SK-N-SH (cell line): ENCODE measurements at regions of chr2 and their contacts with region 1.

Region 1: GRCh38 chr2:84925724-84926376 is 20.4 kb downstream of the TMSB10 start:
- DNase-seq: peak; percentile 87
- H3K4me3 ChIP-seq: peak overlapping the region; percentile 51 to 60
- H3K27ac ChIP-seq: peak overlapping the region in 1 of 2 experiments; percentile 36; a peak in 2 of 4 replicates
- H3K4me1 ChIP-seq: peaks cover 5 to 13% of the 10 kb centered on the region in 2 experiments; a peak in 2 of 4 replicates
- H3K27me3 ChIP-seq: no peaks in the 10 kb centered on the region
- CTCF ChIP-seq: peak; percentile 96
- EP300 ChIP-seq: no peak
- RAD21 ChIP-seq: peak; percentile 70

Region 2: DNA sequence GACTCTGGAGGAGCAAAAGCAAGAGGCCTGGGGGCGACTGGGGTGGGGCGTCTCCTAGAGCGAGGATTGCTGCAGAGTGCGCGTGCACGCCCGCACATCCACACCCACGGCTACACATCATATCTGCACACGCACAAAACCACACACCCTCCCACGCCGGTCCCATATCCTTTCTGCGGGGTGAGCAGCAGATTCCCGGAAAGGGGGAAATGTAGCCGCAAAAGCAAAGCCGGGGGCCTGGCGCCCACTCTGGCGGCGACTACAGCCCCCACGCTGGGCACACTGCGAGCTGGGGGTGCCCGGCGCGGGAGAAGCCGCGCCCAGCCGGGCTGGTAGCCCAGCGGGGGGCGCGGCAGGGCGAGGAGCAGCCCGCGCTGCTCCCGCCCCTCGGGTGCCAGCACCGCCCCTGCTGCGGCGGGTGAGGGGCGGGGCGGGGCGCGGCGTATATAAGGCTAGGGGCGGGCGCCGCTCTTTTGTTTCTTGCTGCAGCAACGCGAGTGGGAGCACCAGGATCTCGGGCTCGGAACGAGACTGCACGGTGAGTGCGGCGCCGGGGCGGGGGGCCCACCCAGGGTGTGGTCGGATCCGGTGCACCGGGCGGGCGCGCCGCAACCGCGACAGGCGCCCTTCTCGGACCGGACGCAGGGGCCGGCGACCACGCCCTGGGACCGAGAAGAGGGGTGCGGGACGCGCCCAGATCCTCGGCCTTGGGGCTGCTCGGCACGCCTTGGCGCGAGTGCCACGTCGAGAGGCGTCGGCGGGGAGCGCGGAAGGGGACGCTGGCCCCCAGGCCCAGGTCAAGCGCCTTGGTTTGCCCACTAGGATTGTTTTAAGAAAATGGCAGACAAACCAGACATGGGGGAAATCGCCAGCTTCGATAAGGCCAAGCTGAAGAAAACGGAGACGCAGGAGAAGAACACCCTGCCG is 20.4 kb before region 1 on chr2 and contains the start of gene TMSB10:
- CTCF ChIA-PET with region 1: interaction called, 36 read pairs
- POLR2A ChIA-PET with region 1: interaction called, 9 read pairs
- DNase-seq: peak; percentile 99
- H3K4me3 ChIP-seq: peak within 1 kb of the TSS; percentile 77 to 88
- H3K27ac ChIP-seq: peak within 1 kb of the TSS; percentile 80 to 81
- H3K4me1 ChIP-seq: peaks cover 0 to 4% of the 10 kb centered on the region in 2 experiments; a peak in 1 of 4 replicates
- H3K27me3 ChIP-seq: no peaks in the 10 kb centered on the region
- CTCF ChIP-seq: 0 out of 2 replicates have a peak, but pooled peaks have one; percentile 25
- EP300 ChIP-seq: peak in 1 of 2 experiments; percentile 27; a peak in 1 of 4 replicates
- RAD21 ChIP-seq: no peak
- polyA plus RNA-seq, gene TMSB10: 3,924 and 7,920 TPM in 2 replicates

Region 3: GRCh38 chr2:84946204-84947009 is 20.6 kb after region 1 on chr2:
- CTCF ChIA-PET with region 1: interaction called, 78 read pairs
- POLR2A ChIA-PET with region 1: no interaction called
- DNase-seq: no peak
- H3K4me3 ChIP-seq: no peak overlapping the region
- H3K27ac ChIP-seq: peak overlapping the region; percentile 36 to 75; a peak in 3 of 4 replicates
- H3K4me1 ChIP-seq: peaks cover 0 to 9% of the 10 kb centered on the region in 2 experiments; a peak in 1 of 4 replicates
- H3K27me3 ChIP-seq: no peaks in the 10 kb centered on the region
- CTCF ChIP-seq: no peak
- EP300 ChIP-seq: peak in 1 of 2 experiments; percentile 57; a peak in 1 of 4 replicates
- RAD21 ChIP-seq: no peak

Region 4: DNA sequence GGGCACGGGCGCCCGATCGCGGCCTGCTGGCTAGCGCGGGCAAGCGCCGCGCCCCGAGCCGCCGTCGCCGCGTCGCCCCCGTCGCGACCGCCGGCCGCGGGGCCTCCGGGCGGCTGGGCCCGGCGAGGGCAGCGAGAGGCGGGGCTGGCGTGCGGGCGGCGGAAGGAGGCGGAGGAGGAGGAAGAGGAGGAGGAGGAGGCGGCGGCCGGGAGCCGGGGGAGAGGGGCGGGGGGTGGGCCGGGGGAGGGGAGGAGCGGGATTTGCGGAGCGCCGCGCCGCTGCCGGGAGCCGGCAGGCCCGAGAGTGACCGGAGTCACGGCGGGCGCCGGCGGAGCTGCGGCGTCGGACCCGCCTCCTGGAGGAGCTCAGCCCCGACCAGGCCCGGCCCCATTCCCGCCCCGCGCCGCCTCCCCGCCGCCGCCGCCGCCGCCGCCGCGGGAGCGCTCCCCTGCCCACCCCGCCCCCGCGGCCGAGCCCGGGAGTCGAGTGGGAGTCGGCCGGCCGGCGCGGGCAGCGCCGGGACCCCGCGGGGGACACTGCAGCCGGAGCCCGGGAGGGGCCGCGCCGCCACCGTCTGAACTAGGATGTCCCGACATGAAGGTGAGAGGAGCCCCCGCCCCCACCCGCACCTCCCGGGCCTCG is 45.1 kb after region 1 on chr2 and contains the start of gene KCMF1:
- CTCF ChIA-PET with region 1: interaction called, 16 read pairs
- POLR2A ChIA-PET with region 1: no interaction called
- DNase-seq: peak; percentile 93
- H3K4me3 ChIP-seq: peak within 1 kb of the TSS; percentile 82 to 99
- H3K27ac ChIP-seq: peak within 1 kb of the TSS; percentile 88 to 93
- H3K4me1 ChIP-seq: peaks cover 10 to 12% of the 10 kb centered on the region in 2 experiments; a peak in 3 of 4 replicates
- H3K27me3 ChIP-seq: no peaks in the 10 kb centered on the region
- CTCF ChIP-seq: no peak
- EP300 ChIP-seq: peak in 1 of 2 experiments; percentile 4; a peak in 1 of 4 replicates
- RAD21 ChIP-seq: no peak
- polyA plus RNA-seq, gene KCMF1: 37.0 and 51.2 TPM in 2 replicates

Region 5: DNA sequence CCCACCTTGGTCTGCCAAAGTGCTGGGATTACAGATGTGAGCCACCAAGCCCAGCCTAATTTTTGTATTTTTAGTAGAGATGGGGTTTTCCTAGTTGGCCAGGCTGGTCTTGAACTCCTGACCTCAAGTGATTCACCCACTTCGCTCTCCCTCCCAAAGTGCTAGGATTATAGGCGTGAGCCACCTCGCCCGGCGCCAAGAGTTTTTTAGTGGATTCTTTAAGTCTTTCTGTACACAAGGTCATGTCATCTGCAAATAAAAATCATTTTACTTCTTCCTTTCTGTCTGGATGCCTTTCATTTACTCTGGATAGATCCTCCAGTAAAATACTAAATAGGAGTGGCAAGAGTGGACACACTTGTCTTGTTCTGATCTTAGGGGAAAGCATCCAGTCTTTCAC is 106.8 kb after region 1 on chr2:
- CTCF ChIA-PET with region 1: interaction called, 15 read pairs
- POLR2A ChIA-PET with region 1: no interaction called
- DNase-seq: no peak
- H3K4me3 ChIP-seq: no peak overlapping the region
- H3K27ac ChIP-seq: no peak overlapping the region
- H3K4me1 ChIP-seq: peaks cover 0 to 12% of the 10 kb centered on the region in 2 experiments; a peak in 2 of 4 replicates
- H3K27me3 ChIP-seq: no peaks in the 10 kb centered on the region
- CTCF ChIP-seq: no peak
- EP300 ChIP-seq: no peak
- RAD21 ChIP-seq: no peak

Region 6: GRCh38 chr2:85089585-85089984 is 163.7 kb after region 1 on chr2:
- CTCF ChIA-PET with region 1: no interaction called
- POLR2A ChIA-PET with region 1: no interaction called
- DNase-seq: no peak
- H3K4me3 ChIP-seq: no peak overlapping the region
- H3K27ac ChIP-seq: no peak overlapping the region
- H3K4me1 ChIP-seq: no peaks in the 10 kb centered on the region
- H3K27me3 ChIP-seq: peaks cover 31% of the 10 kb centered on the region; the same call in 1 of the 2 replicates
- CTCF ChIP-seq: no peak
- EP300 ChIP-seq: no peak
- RAD21 ChIP-seq: no peak

Region 7: GRCh38 chr2:85288244-85288725 is 362.4 kb after region 1 on chr2:
- CTCF ChIA-PET with region 1: interaction called, 17 read pairs
- POLR2A ChIA-PET with region 1: no interaction called
- DNase-seq: no peak
- H3K4me3 ChIP-seq: no peak overlapping the region
- H3K27ac ChIP-seq: no peak overlapping the region
- H3K4me1 ChIP-seq: peaks cover 3 to 9% of the 10 kb centered on the region in 2 experiments; a peak in 2 of 4 replicates
- H3K27me3 ChIP-seq: no peaks in the 10 kb centered on the region
- CTCF ChIP-seq: no peak
- EP300 ChIP-seq: no peak
- RAD21 ChIP-seq: no peak